Activated naive CD4-positive, alpha-beta T cell treated with anti-CD3 and anti-CD28 coated beads for 36 hours (primary cell): ENCODE measurements at regions of chr12 and their contacts with region 1.

Region 1: GRCh38 chr12:104303538-104304151 is at the start of gene EID3:
- DNase-seq: peak; percentile 90
- H3K4me3 Mint-ChIP-seq: peak within 1 kb of the TSS; percentile 87
- H3K27ac Mint-ChIP-seq: peak within 1 kb of the TSS; percentile 77
- H3K4me1 Mint-ChIP-seq: peaks cover 52% of the 10 kb centered on the region
- H3K27me3 Mint-ChIP-seq: no peaks in the 10 kb centered on the region
- total RNA-seq, gene EID3: 3.4 TPM

Region 2: GRCh38 chr12:104137913-104138796 is 165.5 kb before region 1 on chr12 and contains the start of gene NFYB:
- CTCF ChIA-PET with region 1: no interaction called
- intact Hi-C with region 1: loop called (anchors 2 kb)
- DNase-seq: peak; percentile 95
- H3K4me3 Mint-ChIP-seq: peak within 1 kb of the TSS; percentile 84
- H3K27ac Mint-ChIP-seq: peak within 1 kb of the TSS; percentile 84
- H3K4me1 Mint-ChIP-seq: peaks cover 14% of the 10 kb centered on the region
- H3K27me3 Mint-ChIP-seq: no peaks in the 10 kb centered on the region
- total RNA-seq, gene NFYB: 23.3 to 28.3 TPM

Region 3: GRCh38 chr12:104280111-104280510 is 23.5 kb before region 1 on chr12:
- CTCF ChIA-PET with region 1: no interaction called
- intact Hi-C with region 1: no loop called
- DNase-seq: no peak
- H3K4me3 Mint-ChIP-seq: no peak overlapping the region
- H3K27ac Mint-ChIP-seq: no peak overlapping the region
- H3K4me1 Mint-ChIP-seq: peaks cover 15% of the 10 kb centered on the region
- H3K27me3 Mint-ChIP-seq: no peaks in the 10 kb centered on the region